ENCODE measurements at regions of chr5 and their contacts with region 1.

Region 1: DNA sequence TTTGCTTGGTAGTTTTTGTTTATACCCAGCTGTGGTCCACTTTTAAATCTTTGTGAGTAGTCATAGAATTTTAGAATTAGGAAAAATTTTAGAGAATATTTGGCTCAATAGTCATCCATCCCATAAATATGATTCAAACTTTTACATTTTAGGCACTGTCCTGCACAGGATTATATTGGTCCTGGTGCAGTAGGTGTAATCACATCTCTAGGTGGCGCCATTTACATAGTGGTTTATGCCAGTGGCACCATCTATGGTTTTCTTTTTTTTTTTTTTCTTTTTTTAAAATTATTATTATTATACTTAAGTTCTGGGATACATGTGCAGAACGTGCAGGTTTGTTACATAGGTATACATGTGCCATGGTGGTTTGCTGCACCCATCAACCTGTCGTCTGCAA is 260.7 kb upstream of the KCNN2 start:
- DNase-seq: no peak
- ATAC-seq: peak in 1 of 2 donors; percentile 50
- H3K4me3 ChIP-seq: no peak overlapping the region
- H3K27ac ChIP-seq: no peak overlapping the region
- H3K4me1 ChIP-seq: no peaks in the 10 kb centered on the region
- H3K27me3 ChIP-seq: no peaks in the 10 kb centered on the region

Region 2: DNA sequence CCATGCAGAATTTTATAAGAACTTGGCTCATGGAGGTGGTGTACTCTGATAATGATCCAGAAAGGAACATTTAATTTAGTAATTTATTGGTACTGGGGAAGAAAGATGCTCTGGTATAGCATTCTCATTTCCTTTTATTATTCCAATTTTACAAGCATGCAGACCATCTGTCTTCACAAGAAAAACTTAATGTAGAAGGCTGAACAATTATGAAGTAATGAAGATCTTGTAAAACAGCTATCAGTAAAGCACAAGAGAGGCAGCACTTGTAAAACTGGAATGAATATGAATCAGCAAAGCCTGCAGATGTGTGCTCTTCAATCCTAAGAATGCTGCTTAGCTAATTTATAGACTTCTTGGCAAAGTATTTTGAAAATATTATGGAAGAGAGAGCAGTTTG is 287.7 kb before region 1 on chr5:
- intact Hi-C with region 1: no loop called
- DNase-seq: no peak
- ATAC-seq: no peak
- H3K4me3 ChIP-seq: no peak overlapping the region
- H3K27ac ChIP-seq: no peak overlapping the region
- H3K4me1 ChIP-seq: no peaks in the 10 kb centered on the region
- H3K27me3 ChIP-seq: no peaks in the 10 kb centered on the region

Region 3: DNA sequence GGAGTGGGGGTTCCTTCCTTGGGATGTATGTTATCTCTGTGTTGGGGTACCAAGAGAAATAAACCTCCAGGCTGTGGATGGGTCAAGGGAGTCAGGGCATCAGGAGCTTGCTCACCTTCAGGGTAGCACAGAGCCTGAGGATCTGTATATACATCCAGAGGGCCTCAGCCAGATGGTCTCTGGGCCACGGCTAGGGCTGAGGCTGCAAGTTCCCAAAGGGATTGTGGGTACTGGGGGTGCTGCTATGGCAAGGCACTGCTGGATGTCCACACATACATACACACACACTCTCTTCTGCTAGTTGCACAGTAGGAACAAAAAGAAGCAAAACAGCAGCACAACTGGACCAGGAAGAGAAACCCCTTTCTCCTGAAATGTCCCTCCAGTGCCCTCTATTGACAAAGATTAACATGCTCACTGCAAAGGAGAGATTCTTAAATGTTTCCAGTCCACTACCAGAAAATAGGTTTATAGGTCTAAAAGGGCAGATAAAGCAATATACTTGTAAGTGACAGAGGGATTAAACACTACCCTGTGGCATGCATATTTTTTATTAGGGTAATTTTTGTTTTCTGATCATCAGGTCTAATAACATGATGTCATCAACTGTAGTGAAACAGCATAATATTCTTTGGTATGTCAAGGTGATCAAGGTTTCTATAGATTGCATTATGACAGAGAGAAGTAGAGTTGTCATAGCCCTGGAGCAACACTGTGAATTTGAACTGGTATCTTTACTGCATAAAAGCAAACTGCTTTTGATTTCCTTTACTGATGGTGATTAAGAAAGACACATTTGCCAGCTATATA is 204.5 kb after region 1 on chr5:
- intact Hi-C with region 1: loop called in 1 of 4 experiments (anchors 10 kb)
- DNase-seq: no peak
- ATAC-seq: peak in 1 of 2 donors; percentile 20
- H3K4me3 ChIP-seq: no peak overlapping the region
- H3K27ac ChIP-seq: no peak overlapping the region
- H3K4me1 ChIP-seq: no peaks in the 10 kb centered on the region
- H3K27me3 ChIP-seq: no peaks in the 10 kb centered on the region